GM10248 (cell line): ENCODE measurements at regions of chr3 and their contacts with region 1.

Region 1: GRCh38 chr3:18739099-18739433 is 313.9 kb upstream of the SATB1 start:
- DNase-seq: no peak
- CTCF ChIP-seq: no peak

Region 2: GRCh38 chr3:18591120-18591519 is 147.9 kb before region 1 on chr3:
- CTCF ChIA-PET with region 1: no interaction called
- POLR2A ChIA-PET with region 1: no interaction called
- DNase-seq: no peak
- CTCF ChIP-seq: no peak

Region 3: GRCh38 chr3:18758047-18758704 is 19.1 kb after region 1 on chr3:
- CTCF ChIA-PET with region 1: interaction called, 12 read pairs
- POLR2A ChIA-PET with region 1: no interaction called
- DNase-seq: peak; percentile 20
- CTCF ChIP-seq: peak; percentile 54

Region 4: DNA sequence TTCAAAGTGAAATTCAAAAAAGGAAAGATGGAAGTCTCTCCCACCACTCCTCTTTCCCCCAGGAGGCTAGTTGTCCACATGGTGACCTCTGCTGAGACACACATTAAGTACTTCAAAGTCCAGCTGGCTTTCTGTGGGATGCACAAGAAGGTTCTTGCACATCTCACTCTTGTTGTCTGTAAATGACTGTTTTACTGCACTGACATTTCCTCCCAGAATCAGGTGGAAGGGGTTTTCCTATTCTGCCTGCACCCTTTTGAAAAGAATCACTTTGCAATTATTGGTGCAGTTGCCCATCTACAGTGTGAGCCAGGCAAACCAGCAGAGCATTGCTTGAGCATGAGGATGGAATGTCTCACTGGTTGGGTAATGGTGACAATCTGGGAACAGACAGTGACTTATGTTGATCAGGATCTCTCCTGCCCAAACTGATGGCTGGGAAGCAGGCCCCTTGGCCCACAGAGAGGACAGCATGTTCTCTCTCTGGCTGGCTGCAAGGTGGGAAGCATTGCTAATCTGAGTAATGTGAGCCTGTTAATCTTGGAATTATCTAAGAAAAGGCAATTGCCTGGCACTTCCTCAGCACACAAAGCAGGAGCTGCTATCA is 33.7 kb after region 1 on chr3:
- CTCF ChIA-PET with region 1: no interaction called
- POLR2A ChIA-PET with region 1: no interaction called
- DNase-seq: no peak
- CTCF ChIP-seq: no peak